SK-N-SH (cell line): ENCODE measurements at regions of chr6 and their contacts with region 1.

Region 1: GRCh38 chr6:159252955-159253508 is 83.8 kb downstream of the FNDC1 start:
- DNase-seq: peak; percentile 65
- H3K4me3 ChIP-seq: peak overlapping the region in 1 of 2 experiments; percentile 47; a peak in 2 of 4 replicates
- H3K27ac ChIP-seq: no peak overlapping the region
- H3K4me1 ChIP-seq: peaks cover 0 to 3% of the 10 kb centered on the region in 2 experiments; a peak in 1 of 4 replicates
- H3K27me3 ChIP-seq: no peaks in the 10 kb centered on the region; the same call in 1 of the 2 replicates
- CTCF ChIP-seq: peak; percentile 69
- EP300 ChIP-seq: no peak
- RAD21 ChIP-seq: peak; percentile 60

Region 2: DNA sequence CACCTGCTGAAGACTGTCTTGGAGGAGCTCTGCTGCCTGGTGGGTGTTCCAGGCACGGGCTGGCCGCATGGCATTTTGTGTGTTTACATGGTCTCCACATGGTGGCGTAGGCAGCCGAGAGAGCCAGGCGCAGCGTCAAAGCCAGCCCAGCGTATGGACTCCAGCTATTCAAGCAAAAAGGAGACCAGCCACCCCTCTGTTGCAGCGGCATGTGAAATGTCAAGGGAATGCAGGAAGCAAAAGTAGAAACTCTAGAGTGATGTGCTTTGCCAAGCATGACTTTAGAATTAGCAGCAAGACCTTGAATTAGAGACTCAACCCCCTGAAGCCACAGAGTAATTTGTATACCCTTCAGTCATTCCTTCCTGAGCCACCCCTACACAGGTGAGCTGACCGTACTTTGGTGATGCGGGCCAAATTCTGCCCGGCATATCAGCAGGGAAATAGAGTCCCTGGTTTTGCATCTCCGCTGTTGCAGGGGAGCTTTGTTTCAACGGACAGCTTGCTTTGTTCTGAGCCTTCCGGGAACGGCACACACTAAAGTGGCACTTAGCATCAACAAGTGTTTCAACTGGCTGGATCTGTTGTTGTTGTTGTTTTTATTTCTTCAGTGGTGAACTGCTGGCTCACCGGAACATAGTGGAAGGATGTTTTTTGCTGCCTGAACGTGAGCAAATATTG is 35.3 kb before region 1 on chr6:
- CTCF ChIA-PET with region 1: interaction called, 18 read pairs
- POLR2A ChIA-PET with region 1: no interaction called
- DNase-seq: peak; percentile 72
- H3K4me3 ChIP-seq: no peak overlapping the region
- H3K27ac ChIP-seq: no peak overlapping the region
- H3K4me1 ChIP-seq: no peaks in the 10 kb centered on the region
- H3K27me3 ChIP-seq: peaks cover 44% of the 10 kb centered on the region
- CTCF ChIP-seq: peak; percentile 57
- EP300 ChIP-seq: no peak
- RAD21 ChIP-seq: peak; percentile 72

Region 3: DNA sequence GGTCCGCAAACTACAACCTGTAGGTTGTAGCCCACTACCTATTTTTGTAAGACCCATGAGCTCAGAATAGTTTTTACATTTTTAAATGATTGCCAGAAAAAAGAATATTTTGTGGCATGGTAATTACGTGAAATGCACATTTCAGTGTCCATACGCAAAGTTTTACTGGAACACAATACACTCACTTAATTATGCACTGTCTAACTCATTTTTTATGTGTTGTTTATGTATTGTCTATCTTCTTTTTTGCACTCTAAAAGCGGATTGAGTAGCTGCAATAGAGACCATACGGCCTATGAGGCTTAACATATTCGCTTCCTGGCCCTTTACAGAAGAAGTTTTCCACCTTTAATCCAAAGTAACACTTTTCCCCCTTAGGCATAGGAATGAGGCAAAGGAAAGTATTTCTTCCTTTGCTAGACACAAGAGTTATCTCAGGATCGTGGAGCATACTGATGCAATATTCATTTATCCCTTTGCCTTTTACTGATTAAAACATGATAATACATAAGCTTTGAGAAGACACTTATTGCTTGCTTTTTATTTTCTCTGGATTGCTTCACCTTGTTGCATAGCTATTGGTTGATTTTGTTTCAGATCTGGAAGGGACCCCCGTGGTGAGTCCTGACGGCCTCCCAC is 14.0 kb before region 1 on chr6:
- CTCF ChIA-PET with region 1: interaction called, 38 read pairs
- POLR2A ChIA-PET with region 1: no interaction called
- DNase-seq: no peak
- H3K4me3 ChIP-seq: no peak overlapping the region
- H3K27ac ChIP-seq: no peak overlapping the region
- H3K4me1 ChIP-seq: no peaks in the 10 kb centered on the region
- H3K27me3 ChIP-seq: peaks cover 24% of the 10 kb centered on the region
- CTCF ChIP-seq: no peak
- EP300 ChIP-seq: no peak
- RAD21 ChIP-seq: no peak

Region 4: GRCh38 chr6:159279790-159280277 is 26.8 kb after region 1 on chr6:
- CTCF ChIA-PET with region 1: interaction called, 19 read pairs
- POLR2A ChIA-PET with region 1: no interaction called
- DNase-seq: peak; percentile 82
- H3K4me3 ChIP-seq: no peak overlapping the region
- H3K27ac ChIP-seq: peak overlapping the region in 1 of 2 experiments; percentile 65; a peak in 2 of 4 replicates
- H3K4me1 ChIP-seq: peaks cover 0 to 22% of the 10 kb centered on the region in 2 experiments; a peak in 2 of 4 replicates
- H3K27me3 ChIP-seq: no peaks in the 10 kb centered on the region
- CTCF ChIP-seq: no peak
- EP300 ChIP-seq: peak in 1 of 2 experiments; percentile 80; a peak in 2 of 4 replicates
- RAD21 ChIP-seq: no peak; the same call in 1 of the 2 replicates

Region 5: GRCh38 chr6:159378411-159379328 is 125.6 kb after region 1 on chr6:
- CTCF ChIA-PET with region 1: interaction called, 11 read pairs
- POLR2A ChIA-PET with region 1: no interaction called
- DNase-seq: no peak
- H3K4me3 ChIP-seq: no peak overlapping the region
- H3K27ac ChIP-seq: no peak overlapping the region
- H3K4me1 ChIP-seq: no peaks in the 10 kb centered on the region
- H3K27me3 ChIP-seq: peaks cover 19% of the 10 kb centered on the region
- CTCF ChIP-seq: no peak
- EP300 ChIP-seq: no peak
- RAD21 ChIP-seq: no peak

Region 6: DNA sequence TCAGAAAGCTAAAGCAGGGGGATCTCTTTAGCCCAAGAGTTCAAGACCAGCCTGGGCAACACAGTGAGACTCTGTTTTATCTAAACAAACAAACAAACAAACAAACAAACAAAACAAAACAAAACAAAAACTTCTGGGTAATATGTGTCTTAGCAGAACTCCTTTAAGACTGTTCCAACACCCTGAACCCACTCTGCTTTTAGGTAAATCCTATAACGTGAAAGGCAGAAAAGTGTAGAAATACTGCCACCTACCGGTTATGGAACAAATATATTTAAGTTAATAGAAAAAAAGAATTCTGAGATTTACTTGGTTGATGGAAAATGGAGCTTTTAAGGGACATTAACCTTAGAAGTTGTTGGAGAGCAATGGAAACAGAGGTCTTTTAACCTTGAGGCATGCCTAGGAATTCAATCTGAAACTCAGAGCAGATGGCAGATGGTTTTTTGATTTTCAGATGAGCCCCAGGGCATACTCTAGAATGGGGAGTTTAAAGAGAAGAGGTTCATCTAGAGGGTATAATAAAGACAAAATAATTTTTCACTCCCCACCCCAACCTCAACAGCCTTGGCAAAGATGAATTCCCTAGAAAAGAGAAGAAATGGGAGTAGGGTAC is 401.6 kb after region 1 on chr6:
- CTCF ChIA-PET with region 1: interaction called, 13 read pairs
- POLR2A ChIA-PET with region 1: no interaction called
- DNase-seq: peak; percentile 41
- H3K4me3 ChIP-seq: no peak overlapping the region
- H3K27ac ChIP-seq: no peak overlapping the region
- H3K4me1 ChIP-seq: no peaks in the 10 kb centered on the region
- H3K27me3 ChIP-seq: no peaks in the 10 kb centered on the region
- CTCF ChIP-seq: peak; percentile 78
- EP300 ChIP-seq: no peak
- RAD21 ChIP-seq: peak; percentile 75